ENCODE measurements at regions of chr7 and their contacts with region 1.

Region 1: GRCh38 chr7:47466894-47467293 is 115.0 kb downstream of the TNS3 start:
- DNase-seq: no peak
- ATAC-seq: no peak
- H3K4me3 ChIP-seq: no peak overlapping the region
- H3K27ac ChIP-seq: no peak overlapping the region
- H3K4me1 ChIP-seq: peaks cover 71% of the 10 kb centered on the region
- H3K27me3 ChIP-seq: no peaks in the 10 kb centered on the region
- CTCF ChIP-seq: no peak
- EP300 ChIP-seq: no peak
- POLR2A ChIP-seq: no peak
- RAD21 ChIP-seq: no peak

Region 2: GRCh38 chr7:47418601-47419381 is 48.1 kb before region 1 on chr7:
- CTCF ChIA-PET with region 1: no interaction called
- POLR2A ChIA-PET with region 1: no interaction called
- in situ Hi-C with region 1: no loop called
- intact Hi-C with region 1: loop called (anchors 1 kb)
- DNase-seq: no peak
- ATAC-seq: no peak; the same call in 2 of the 3 replicates
- H3K4me3 ChIP-seq: no peak overlapping the region
- H3K27ac ChIP-seq: no peak overlapping the region
- H3K4me1 ChIP-seq: peaks cover 24% of the 10 kb centered on the region
- H3K27me3 ChIP-seq: no peaks in the 10 kb centered on the region
- CTCF ChIP-seq: no peak
- EP300 ChIP-seq: no peak
- POLR2A ChIP-seq: no peak
- RAD21 ChIP-seq: no peak